SK-N-SH (cell line): ENCODE measurements at regions of chr1 and their contacts with region 1.

Region 1: GRCh38 chr1:23403735-23404486 is 20.6 kb downstream of the TCEA3 start:
- DNase-seq: peak; percentile 89
- H3K4me3 ChIP-seq: peak overlapping the region in 1 of 2 experiments; percentile 14; a peak in 2 of 4 replicates
- H3K27ac ChIP-seq: peak overlapping the region; percentile 65 to 86
- H3K4me1 ChIP-seq: peaks cover 15 to 20% of the 10 kb centered on the region in 2 experiments
- H3K27me3 ChIP-seq: no peaks in the 10 kb centered on the region
- CTCF ChIP-seq: peak; percentile 97
- EP300 ChIP-seq: peak; percentile 58 to 63; a peak in 2 of 4 replicates
- RAD21 ChIP-seq: peak; percentile 94

Region 2: GRCh38 chr1:22388671-22389450 is 1015.0 kb before region 1 on chr1:
- CTCF ChIA-PET with region 1: no interaction called
- POLR2A ChIA-PET with region 1: no interaction called
- DNase-seq: no peak
- H3K4me3 ChIP-seq: no peak overlapping the region
- H3K27ac ChIP-seq: no peak overlapping the region
- H3K4me1 ChIP-seq: peaks cover 0 to 10% of the 10 kb centered on the region in 2 experiments; a peak in 1 of 4 replicates
- H3K27me3 ChIP-seq: no peaks in the 10 kb centered on the region; the same call in none of the 2 replicates
- CTCF ChIP-seq: no peak
- EP300 ChIP-seq: no peak
- RAD21 ChIP-seq: no peak

Region 3: DNA sequence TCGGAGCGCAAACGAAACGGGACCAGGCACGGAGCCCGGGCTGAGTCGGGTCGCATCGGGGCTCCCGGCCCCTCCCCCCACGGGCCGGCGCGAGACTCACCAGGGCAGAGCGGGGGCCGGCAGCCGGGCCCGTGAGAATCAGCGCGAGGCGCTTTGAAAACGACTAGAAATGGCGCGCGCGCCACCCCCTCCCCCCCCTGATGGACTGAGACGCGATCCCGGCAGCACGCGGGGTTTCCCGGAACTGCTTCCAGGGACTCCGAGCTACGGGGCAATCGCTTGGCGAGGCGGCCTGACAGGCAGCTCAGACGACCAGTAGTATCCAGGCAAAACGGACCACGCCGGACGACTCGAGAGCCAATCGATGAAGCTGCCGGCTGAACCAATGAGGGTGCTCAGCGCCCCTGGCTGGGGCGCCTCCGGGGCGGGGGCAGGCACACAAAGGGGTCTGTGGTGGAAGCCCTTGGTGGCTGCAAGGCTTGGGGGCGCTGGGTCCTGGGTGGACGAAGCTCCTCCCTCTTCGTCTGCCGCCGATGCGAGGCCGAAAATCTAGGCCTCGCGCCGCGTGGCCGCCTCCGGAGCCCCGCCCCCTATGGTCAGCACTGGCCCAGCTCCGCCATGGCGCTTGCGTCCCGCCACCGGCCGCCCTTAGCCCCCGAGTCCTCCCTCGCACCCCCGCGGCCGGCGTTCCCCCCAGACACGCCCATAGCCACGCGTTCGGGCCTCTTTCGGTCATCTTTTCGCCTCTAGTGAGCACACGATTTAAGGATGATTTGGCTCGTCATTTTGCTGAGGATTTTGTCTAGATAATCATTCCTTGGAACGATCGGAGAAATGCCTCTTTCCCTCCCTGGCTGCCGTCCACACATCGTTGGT is 59.6 kb before region 1 on chr1 and contains the start of gene HNRNPR:
- CTCF ChIA-PET with region 1: interaction called, 25 read pairs
- POLR2A ChIA-PET with region 1: interaction called, 12 read pairs
- DNase-seq: peak; percentile 97
- H3K4me3 ChIP-seq: peak within 1 kb of the TSS; percentile 73 to 95
- H3K27ac ChIP-seq: peak within 1 kb of the TSS; percentile 98 to 99
- H3K4me1 ChIP-seq: peaks cover 5 to 15% of the 10 kb centered on the region in 2 experiments; a peak in 3 of 4 replicates
- H3K27me3 ChIP-seq: no peaks in the 10 kb centered on the region
- CTCF ChIP-seq: no peak
- EP300 ChIP-seq: no peak; a peak in 1 of 4 replicates
- RAD21 ChIP-seq: no peak
- polyA plus RNA-seq, gene HNRNPR: 111 and 141 TPM in 2 replicates

Region 4: DNA sequence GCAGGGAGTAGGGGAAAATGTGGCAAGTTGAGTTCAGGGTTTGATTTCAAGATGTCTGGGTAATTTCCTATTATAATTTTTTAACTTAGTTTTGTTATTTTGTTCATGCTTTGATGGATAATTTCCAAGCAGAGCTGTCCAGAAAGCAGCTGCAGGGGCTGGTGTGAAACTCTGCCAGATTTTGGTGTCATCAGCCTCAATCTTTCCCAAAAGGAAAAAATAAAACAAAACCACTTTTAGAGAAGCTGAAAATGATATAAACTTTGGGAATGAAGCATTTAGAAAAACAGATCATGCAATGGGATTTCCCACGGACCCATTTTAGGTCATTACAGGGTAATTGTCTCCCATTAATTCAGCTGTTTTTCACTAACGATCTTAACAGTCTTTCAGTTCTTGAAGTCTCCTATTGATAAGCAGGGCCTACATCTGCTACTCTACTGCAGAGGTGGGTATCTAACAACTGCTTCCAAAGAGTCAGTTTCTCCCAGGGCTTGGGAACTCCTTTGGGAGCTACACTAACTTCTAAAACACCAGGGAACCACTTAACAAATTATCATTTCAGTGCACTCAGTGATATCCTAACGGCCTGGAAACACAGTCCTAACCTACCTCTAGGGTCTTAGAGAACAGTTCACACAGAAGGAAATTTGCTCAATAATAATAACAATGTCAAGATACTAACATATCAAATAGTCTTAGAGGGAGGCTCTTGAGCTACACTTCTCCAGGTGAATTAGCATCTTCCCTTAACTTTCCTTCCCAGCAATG is 46.6 kb before region 1 on chr1:
- CTCF ChIA-PET with region 1: interaction called, 10 read pairs
- POLR2A ChIA-PET with region 1: no interaction called
- DNase-seq: no peak
- H3K4me3 ChIP-seq: no peak overlapping the region
- H3K27ac ChIP-seq: peak overlapping the region in 1 of 2 experiments; percentile 78; a peak in 2 of 4 replicates
- H3K4me1 ChIP-seq: peaks cover 0 to 12% of the 10 kb centered on the region in 2 experiments; a peak in 1 of 4 replicates
- H3K27me3 ChIP-seq: no peaks in the 10 kb centered on the region
- CTCF ChIP-seq: no peak
- EP300 ChIP-seq: no peak
- RAD21 ChIP-seq: no peak

Region 5: DNA sequence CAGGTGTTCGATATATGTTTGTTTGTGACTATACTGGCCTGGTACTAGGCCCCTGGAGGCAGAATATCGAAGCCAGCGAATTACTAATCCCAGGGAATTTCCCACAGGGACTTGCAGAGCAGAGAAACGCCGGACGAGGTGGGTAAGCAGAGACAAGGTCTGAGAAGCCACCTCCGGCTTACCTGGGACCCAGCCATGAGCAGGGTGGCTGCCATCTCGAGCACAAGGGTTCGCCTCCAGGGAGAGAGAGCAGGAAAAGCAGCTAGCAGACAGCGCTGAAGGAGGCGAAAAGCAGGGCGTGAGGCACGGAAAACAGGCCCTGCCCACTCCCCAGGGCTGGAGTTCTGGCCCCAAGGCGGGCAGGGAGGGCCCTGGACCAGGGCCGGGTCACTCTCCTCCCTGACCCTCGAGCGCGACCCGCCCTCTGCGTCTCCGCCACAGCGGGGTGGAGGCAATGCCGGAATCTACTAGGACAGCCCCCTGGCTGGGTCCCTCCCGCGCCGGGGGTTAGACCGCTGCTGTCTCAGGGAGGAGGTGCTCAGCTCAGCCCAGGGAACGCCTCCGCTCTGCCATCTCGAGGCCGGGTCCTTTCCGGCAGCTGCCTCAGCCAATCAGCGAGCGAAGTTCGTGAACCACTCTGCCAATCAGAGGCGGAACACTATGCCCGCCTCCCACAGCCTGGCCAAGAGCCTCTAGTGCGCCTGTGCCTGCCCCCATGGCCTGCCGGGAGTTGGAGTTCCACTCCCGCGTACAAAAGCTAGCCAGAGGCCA is 35.9 kb before region 1 on chr1:
- CTCF ChIA-PET with region 1: interaction called, 61 read pairs
- POLR2A ChIA-PET with region 1: interaction called, 6 read pairs
- DNase-seq: peak; percentile 97
- H3K4me3 ChIP-seq: peak overlapping the region; percentile 94 to 97
- H3K27ac ChIP-seq: peak overlapping the region; percentile 92 to 99
- H3K4me1 ChIP-seq: peaks cover 15 to 30% of the 10 kb centered on the region in 2 experiments
- H3K27me3 ChIP-seq: no peaks in the 10 kb centered on the region
- CTCF ChIP-seq: no peak
- EP300 ChIP-seq: no peak
- RAD21 ChIP-seq: no peak

Region 6: DNA sequence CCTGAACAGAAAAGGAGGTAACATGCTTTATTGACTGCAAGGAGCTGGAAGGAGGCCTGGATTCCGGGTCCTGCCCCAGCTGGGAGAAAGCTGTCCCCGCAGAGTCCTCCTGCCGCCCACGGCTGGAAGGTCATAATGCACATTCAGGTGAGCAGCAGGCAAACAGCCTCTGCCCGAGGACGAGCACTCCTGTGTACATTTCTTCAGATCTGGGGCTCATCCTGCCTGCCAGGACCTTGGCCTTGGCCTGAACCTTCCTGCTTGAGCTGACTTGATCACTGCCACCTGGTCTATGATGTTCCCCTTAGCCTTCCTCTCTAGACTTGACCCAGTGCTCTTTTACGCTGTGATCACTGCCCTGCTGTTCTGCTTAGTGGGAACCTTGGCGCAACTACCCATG is 16.4 kb before region 1 on chr1:
- CTCF ChIA-PET with region 1: interaction called, 10 read pairs
- POLR2A ChIA-PET with region 1: no interaction called
- DNase-seq: no peak
- H3K4me3 ChIP-seq: no peak overlapping the region
- H3K27ac ChIP-seq: no peak overlapping the region
- H3K4me1 ChIP-seq: peaks cover 0 to 6% of the 10 kb centered on the region in 2 experiments; a peak in 2 of 4 replicates
- H3K27me3 ChIP-seq: no peaks in the 10 kb centered on the region
- CTCF ChIP-seq: no peak
- EP300 ChIP-seq: no peak
- RAD21 ChIP-seq: no peak

Region 7: DNA sequence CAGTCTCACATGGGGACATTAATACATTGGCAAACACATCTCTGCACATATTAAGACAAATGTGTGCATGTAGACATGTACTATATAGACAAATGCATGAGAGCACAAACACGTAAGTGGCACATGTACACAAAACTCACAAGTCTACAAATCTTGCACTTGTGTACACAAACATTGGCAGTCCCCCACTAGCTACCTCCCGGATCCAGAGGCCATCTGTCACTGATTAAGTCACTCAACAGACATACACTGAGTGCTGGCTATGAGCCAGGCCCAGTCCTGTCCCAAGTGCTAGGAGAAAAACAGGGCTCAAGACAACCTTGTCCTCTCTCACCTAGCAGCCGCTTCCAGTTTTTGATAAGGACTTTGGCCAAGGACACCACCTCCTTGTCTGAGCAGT is 13.7 kb after region 1 on chr1:
- CTCF ChIA-PET with region 1: interaction called, 42 read pairs
- POLR2A ChIA-PET with region 1: interaction called, 3 read pairs
- DNase-seq: peak; percentile 87
- H3K4me3 ChIP-seq: no peak overlapping the region
- H3K27ac ChIP-seq: peak overlapping the region in 1 of 2 experiments; percentile 80; a peak in 2 of 4 replicates
- H3K4me1 ChIP-seq: peaks cover 0 to 22% of the 10 kb centered on the region in 2 experiments; a peak in 1 of 4 replicates
- H3K27me3 ChIP-seq: no peaks in the 10 kb centered on the region
- CTCF ChIP-seq: no peak
- EP300 ChIP-seq: peak in 1 of 2 experiments; percentile 42; a peak in 1 of 4 replicates
- RAD21 ChIP-seq: no peak

Region 8: DNA sequence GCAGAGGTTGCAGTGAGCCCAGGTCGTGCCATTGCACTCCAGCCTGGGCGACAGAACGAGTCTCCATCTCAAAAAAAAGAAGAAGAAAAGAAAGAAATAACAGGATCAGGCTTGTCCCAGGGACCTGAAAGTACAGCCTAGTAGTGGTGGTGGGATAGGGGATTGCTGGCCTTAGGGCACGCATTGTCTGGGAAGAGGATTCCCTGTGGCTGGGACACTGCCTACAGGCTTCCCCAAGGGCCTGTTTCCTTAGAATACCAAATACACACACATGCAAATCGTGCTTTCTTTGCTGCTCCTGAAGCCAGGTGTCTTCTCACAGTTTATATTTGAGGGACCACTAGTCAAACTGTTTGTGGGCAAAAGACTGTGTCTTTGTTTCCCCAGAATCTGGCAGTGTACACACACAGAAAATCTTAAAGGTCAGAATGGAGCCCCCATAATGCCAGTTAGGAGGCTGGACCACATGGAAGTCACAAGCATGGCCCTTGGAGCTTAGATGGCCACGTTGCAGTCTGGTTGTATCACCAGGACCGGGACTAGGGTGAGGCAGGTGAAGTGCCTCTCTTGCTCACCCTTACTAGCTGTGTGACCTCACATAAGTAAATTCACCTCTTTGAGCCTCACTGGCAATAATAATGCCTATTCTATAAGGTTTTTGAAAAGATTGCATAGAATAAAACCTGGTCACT is 92.7 kb after region 1 on chr1:
- CTCF ChIA-PET with region 1: interaction called, 13 read pairs
- POLR2A ChIA-PET with region 1: no interaction called
- DNase-seq: no peak
- H3K4me3 ChIP-seq: no peak overlapping the region; a peak in 1 of 4 replicates
- H3K27ac ChIP-seq: no peak overlapping the region
- H3K4me1 ChIP-seq: no peaks in the 10 kb centered on the region
- H3K27me3 ChIP-seq: no peaks in the 10 kb centered on the region
- CTCF ChIP-seq: no peak
- EP300 ChIP-seq: no peak
- RAD21 ChIP-seq: no peak